ENCODE measurements at regions of chr12 and their contacts with region 1.

Region 1: GRCh38 chr12:101280006-101280505 is at the start of gene UTP20:
- DNase-seq: peak; percentile 94 to 98
- ATAC-seq: peak; percentile 100
- H3K4me3 ChIP-seq: peak within 1 kb of the TSS; percentile 54 to 83
- H3K27ac ChIP-seq: no peak within 1 kb of the TSS
- H3K4me1 ChIP-seq: no peaks in the 10 kb centered on the region
- H3K27me3 ChIP-seq: no peaks in the 10 kb centered on the region
- total RNA-seq, gene UTP20: 11.4 to 15.3 TPM

Region 2: DNA sequence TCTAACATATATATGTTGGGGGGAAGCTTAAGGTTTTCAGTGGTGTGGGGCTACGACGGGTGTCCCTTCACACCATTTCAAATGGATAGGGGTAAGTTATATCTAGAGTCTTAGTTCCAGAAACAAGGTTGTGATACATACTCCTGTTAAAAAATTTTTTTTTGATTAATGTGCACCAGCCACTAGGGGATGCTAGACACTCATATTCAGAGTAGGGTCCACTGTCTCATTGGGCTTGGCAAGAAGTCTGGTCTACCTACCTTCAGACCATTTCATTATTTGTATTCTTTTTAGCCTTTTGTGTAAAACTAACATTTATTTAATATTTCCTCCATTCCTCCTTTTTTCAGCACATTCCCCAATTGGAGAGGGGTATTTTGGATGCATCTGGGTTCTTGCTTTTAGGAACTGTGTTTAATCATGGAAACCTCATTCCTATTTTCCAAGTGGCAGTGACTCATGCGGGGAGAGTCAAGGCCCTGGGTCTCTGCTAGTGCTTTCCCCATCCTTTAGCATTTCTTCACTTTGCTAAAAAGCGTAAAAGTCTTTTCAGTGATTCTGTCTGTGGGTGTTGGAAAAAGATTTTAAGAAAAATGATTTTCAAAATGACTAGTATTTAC is 452.0 kb before region 1 on chr12:
- intact Hi-C with region 1: loop called in 1 of 2 experiments (anchors 5 kb)
- DNase-seq: no peak
- ATAC-seq: no peak
- H3K4me3 ChIP-seq: no peak overlapping the region
- H3K27ac ChIP-seq: no peak overlapping the region
- H3K4me1 ChIP-seq: no peaks in the 10 kb centered on the region
- H3K27me3 ChIP-seq: no peaks in the 10 kb centered on the region

Region 3: DNA sequence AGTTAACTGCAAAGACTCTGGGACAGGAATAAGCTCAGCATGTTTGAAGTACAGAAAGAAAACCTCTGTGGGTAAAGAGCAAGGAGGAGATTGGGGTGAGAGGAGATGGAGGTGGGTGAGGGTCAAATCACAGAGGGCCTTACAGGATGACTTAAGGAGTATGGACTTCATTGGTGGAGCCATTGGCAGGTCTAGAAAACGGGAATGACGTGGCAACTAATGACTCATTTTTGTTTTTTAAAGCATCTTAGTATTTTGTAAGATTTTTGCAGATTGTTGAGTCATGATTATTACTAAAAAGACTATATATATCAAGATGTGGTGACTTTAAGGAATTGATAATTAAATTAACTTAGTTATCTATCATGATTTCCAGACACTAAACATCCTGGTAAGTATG is 18.4 kb after region 1 on chr12:
- intact Hi-C with region 1: no loop called
- DNase-seq: no peak
- ATAC-seq: no peak
- H3K4me3 ChIP-seq: no peak overlapping the region
- H3K27ac ChIP-seq: no peak overlapping the region
- H3K4me1 ChIP-seq: no peaks in the 10 kb centered on the region
- H3K27me3 ChIP-seq: no peaks in the 10 kb centered on the region

Region 4: DNA sequence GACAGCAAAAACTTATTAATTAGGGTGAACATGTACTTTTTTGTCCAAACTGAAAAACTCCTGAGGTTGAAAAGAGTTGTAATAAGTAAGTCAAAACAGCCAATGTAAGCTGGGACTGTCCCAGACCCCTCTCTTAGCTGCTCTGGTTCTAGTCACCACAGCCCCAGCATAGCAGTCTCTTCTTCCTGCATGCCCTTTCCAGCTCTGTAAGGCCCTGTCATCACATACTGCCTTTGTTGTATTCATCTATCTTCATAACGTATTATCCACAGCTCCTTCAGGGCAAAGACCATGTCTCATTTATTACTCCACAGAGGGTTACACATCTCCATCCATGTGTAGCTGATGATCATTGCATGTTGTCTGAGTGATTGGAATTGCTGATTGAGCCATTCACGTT is 56.4 kb after region 1 on chr12:
- intact Hi-C with region 1: no loop called
- DNase-seq: no peak
- ATAC-seq: no peak
- H3K4me3 ChIP-seq: no peak overlapping the region
- H3K27ac ChIP-seq: no peak overlapping the region
- H3K4me1 ChIP-seq: no peaks in the 10 kb centered on the region
- H3K27me3 ChIP-seq: no peaks in the 10 kb centered on the region

Region 5: DNA sequence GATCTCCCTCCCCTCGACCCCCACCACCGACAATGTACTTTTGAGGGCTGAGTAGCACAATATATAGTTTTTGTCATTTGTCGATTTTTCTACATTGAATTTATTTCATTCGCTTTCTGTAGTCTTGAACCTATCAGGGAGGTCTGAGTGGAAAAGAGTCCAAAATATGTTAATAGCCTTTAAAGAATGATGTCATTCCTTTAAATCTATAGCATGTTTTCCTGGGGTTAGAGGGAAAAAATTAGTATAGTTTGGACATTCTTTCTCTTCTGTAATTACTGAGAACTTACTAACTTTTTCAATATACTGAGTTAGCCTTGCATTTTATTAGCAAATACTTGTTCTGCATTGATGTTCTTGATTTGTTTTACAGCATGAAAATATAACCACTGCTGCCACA is 71.6 kb after region 1 on chr12:
- intact Hi-C with region 1: no loop called
- DNase-seq: no peak
- ATAC-seq: no peak
- H3K4me3 ChIP-seq: no peak overlapping the region
- H3K27ac ChIP-seq: no peak overlapping the region
- H3K4me1 ChIP-seq: no peaks in the 10 kb centered on the region
- H3K27me3 ChIP-seq: no peaks in the 10 kb centered on the region

Measured in aorta (tissue), 5 donors.